ENCODE measurements at regions of chr12 and their contacts with region 1.

Region 1: DNA sequence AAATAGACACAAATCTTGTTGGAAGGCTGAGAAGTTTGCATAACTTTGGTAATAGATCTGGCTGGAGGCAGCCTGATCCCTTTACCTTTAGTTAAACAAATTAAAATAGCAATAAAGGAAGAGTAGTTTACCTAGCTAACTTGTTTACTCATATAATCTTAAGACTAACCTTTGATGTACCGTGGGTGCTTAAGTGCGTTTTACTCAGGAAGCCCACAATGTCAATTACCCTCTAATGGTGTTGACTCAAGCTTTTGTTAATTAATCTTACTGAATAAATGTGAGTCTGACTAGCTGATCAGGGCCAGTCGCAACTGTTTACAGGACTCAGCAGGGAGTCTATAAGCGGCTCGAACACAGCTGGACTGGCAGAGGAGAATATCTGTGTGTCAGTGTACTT is 51.5 kb downstream of the FAR2 start:
- DNase-seq: no peak
- ATAC-seq: no peak
- H3K4me3 ChIP-seq: no peak overlapping the region
- H3K27ac ChIP-seq: no peak overlapping the region
- H3K4me1 ChIP-seq: no peaks in the 10 kb centered on the region
- H3K27me3 ChIP-seq: no peaks in the 10 kb centered on the region
- CTCF ChIP-seq: no peak

Region 2: DNA sequence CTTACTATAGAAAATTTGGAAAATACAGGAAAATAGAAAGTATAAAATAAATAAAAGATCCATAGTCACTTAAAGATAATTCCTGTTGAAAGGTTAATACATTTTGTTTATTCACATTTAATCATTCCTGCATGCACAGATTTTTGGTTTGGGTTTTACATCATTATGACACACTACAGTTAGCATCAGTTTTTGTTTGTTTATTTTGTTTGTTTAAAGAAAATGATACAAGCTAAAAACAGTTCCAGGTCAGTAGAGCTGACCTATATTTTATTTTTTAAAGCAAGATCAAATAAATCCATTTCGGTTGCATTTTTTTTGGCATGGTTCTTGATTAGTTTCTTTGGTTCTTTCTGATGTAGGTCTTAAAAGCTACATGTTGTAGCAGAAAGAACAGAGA is 1079.2 kb before region 1 on chr12:
- intact Hi-C with region 1: loop called in 1 of 10 experiments (anchors 5 kb)
- DNase-seq: no peak
- ATAC-seq: no peak
- H3K4me3 ChIP-seq: no peak overlapping the region
- H3K27ac ChIP-seq: no peak overlapping the region
- H3K4me1 ChIP-seq: no peaks in the 10 kb centered on the region
- H3K27me3 ChIP-seq: no peaks in the 10 kb centered on the region
- CTCF ChIP-seq: no peak